ENCODE measurements at regions of chr3 and their contacts with region 1.

Region 1: DNA sequence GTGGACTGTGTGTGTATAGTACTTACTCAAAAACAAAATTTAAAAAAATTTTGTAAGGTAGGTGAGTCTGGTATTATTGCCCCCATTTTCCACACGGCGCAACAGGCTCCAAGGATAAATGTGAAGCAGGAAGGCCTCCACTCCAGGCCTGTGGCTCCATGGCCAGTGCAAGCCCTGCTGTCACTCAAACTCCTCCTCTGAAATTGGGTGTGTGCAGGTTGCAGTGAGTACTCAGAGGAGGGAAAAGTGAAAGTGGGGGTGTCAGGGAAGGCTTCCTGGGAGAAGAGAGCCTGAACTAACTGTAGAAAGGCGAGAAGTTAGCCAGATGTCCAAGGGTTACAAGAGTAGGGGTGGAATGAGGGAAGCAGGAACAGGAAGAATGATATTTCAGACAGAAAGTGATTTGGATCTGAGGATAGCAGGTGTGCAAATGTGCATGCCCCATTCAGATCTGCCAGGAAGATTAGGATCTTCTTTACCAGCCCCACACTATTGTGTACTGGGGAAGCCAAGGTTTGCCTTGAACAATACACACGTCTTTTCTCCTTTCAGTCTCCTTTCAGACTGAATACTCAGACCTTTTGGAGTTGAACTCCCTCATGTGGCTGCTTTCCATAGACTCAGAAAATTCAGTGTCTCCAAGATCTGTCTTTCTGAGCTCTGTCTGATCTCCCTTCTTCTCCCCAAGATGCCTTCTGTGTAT is 48.7 kb upstream of the RYK start:
- DNase-seq: no peak
- ATAC-seq: peak; percentile 81
- H3K4me3 ChIP-seq: no peak overlapping the region
- H3K27ac ChIP-seq: no peak overlapping the region
- H3K4me1 ChIP-seq: peaks cover 3% of the 10 kb centered on the region; the same call in 1 of the 2 replicates
- H3K27me3 ChIP-seq: no peaks in the 10 kb centered on the region
- CTCF ChIP-seq: peak; percentile 70

Region 2: DNA sequence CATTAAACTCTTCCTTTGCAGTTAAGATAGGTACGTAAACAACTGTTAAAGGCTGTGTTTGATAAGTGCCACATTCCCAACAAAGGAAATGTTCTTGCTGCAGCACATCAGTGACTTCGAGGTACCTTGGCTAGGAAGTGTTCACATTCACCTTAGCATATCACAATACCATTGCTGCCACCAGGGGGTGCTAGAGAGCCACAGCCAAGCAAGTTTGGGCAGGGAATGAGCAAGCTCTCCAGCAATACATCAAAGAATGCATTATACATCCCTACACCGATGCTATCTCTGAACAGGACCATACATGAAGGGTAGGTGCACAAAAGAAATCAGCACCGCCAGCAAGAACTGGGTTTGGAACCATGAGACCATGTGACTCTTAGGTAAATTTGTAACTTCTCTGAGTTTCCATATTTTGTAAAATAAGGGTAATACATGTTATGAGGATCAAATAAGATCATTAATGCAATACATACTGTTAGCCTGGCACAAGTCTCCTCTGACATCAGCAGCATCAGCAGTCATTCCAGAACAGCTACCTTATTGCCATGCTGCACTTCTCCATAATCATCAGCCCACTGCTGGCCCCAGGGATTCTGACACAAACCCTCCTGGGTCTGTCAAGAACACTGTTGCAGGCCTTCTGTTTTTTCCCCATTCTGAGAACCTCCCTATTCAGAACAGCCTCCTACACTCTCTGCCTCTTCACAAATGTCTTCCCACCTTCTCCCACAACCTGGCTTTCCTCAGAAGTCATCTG is 86.2 kb before region 1 on chr3:
- CTCF ChIA-PET with region 1: interaction called, 15 read pairs
- POLR2A ChIA-PET with region 1: no interaction called
- in situ Hi-C with region 1: no loop called
- intact Hi-C with region 1: loop called (anchors 2 kb)
- DNase-seq: peak; percentile 60
- ATAC-seq: peak; percentile 97
- H3K4me3 ChIP-seq: no peak overlapping the region
- H3K27ac ChIP-seq: no peak overlapping the region
- H3K4me1 ChIP-seq: peaks cover 6% of the 10 kb centered on the region
- H3K27me3 ChIP-seq: no peaks in the 10 kb centered on the region
- CTCF ChIP-seq: peak; percentile 100

Region 3: DNA sequence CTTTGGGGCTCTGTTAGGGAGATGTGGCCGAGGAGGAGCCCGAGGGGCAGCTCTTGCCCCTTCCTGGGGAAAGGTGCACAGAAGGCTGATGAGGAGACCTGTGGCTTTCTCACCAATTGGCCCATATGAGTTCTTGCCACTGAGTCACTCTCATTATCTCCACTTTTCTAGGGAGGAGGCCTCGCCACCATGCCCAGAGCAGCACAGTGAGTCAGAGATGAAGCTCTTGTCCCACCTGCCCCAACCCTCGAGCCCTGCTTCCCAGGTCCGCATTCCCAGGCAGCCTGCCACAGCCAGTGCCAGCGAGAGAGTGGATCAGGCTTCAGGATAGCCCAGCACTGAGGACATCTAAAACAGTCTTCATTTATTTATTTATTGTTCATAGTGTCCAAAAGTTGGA is 21.4 kb after region 1 on chr3:
- CTCF ChIA-PET with region 1: interaction called, 14 read pairs
- POLR2A ChIA-PET with region 1: no interaction called
- in situ Hi-C with region 1: no loop called
- intact Hi-C with region 1: no loop called
- DNase-seq: no peak
- ATAC-seq: peak; percentile 70
- H3K4me3 ChIP-seq: no peak overlapping the region
- H3K27ac ChIP-seq: peak overlapping the region; percentile 85
- H3K4me1 ChIP-seq: peaks cover 39% of the 10 kb centered on the region
- H3K27me3 ChIP-seq: no peaks in the 10 kb centered on the region
- CTCF ChIP-seq: no peak